Right ventricle myocardium superior (tissue), 1 donor: ENCODE measurements at regions of chr15 and their contacts with region 1.

Region 1: GRCh38 chr15:84588053-84588874 is 12.5 kb upstream of the ZSCAN2 start:
- DNase-seq: peak; percentile 90
- ATAC-seq: peak; percentile 99

Region 2: GRCh38 chr15:84818261-84819131 is 230.2 kb after region 1 on chr15:
- intact Hi-C with region 1: loop called (anchors 10 kb)
- DNase-seq: no peak
- ATAC-seq: peak; percentile 18

Region 3: GRCh38 chr15:84929744-84930371 is 341.6 kb after region 1 on chr15:
- intact Hi-C with region 1: loop called (anchors 5 kb)
- DNase-seq: no peak
- ATAC-seq: no peak